IMR-90 (cell line): ENCODE measurements at regions of chr4 and their contacts with region 1.

Region 1: DNA sequence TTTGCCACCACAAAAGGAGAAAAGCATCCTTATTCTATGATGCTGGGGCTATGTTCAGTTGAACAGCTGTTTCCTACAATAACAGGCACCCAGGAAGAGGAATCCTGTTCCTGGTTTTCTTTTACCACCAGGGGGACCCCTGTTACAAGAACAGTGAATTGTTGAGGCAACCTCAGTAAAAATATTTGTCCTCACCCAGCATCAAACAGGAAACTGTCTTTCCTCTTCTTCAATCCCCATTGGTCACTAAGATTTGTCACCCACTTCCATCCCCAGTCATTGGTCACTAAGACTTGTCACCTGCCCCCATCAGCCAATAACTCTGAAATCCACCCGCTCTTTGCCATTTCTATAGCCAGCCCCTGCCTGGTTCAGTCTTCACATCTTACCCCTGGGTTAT is 143.5 kb upstream of the GALNT7 start:
- DNase-seq: peak; percentile 77
- ATAC-seq: peak; percentile 90
- H3K4me3 ChIP-seq: no peak overlapping the region
- H3K27ac ChIP-seq: no peak overlapping the region
- H3K4me1 ChIP-seq: no peaks in the 10 kb centered on the region
- H3K27me3 ChIP-seq: peaks cover 14% of the 10 kb centered on the region
- CTCF ChIP-seq: peak; percentile 87
- POLR2A ChIP-seq: no peak
- RAD21 ChIP-seq: peak; percentile 85

Region 2: GRCh38 chr4:173223743-173224142 is 198.6 kb after region 1 on chr4:
- CTCF ChIA-PET with region 1: no interaction called
- POLR2A ChIA-PET with region 1: interaction called, 21 read pairs
- dilution Hi-C with region 1: no loop called
- in situ Hi-C with region 1: no loop called
- intact Hi-C with region 1: no loop called
- DNase-seq: no peak
- ATAC-seq: no peak
- H3K4me3 ChIP-seq: no peak overlapping the region
- H3K27ac ChIP-seq: no peak overlapping the region
- H3K4me1 ChIP-seq: no peaks in the 10 kb centered on the region
- H3K27me3 ChIP-seq: no peaks in the 10 kb centered on the region
- CTCF ChIP-seq: no peak
- POLR2A ChIP-seq: no peak
- RAD21 ChIP-seq: no peak

Region 3: GRCh38 chr4:173301518-173302201 is 276.5 kb after region 1 on chr4:
- CTCF ChIA-PET with region 1: interaction called, 14 read pairs
- POLR2A ChIA-PET with region 1: no interaction called
- dilution Hi-C with region 1: no loop called
- in situ Hi-C with region 1: no loop called
- intact Hi-C with region 1: loop called (anchors 1 kb)
- DNase-seq: peak; percentile 66
- ATAC-seq: peak; percentile 75
- H3K4me3 ChIP-seq: no peak overlapping the region
- H3K27ac ChIP-seq: no peak overlapping the region
- H3K4me1 ChIP-seq: no peaks in the 10 kb centered on the region
- H3K27me3 ChIP-seq: no peaks in the 10 kb centered on the region
- CTCF ChIP-seq: peak; percentile 74
- POLR2A ChIP-seq: no peak
- RAD21 ChIP-seq: peak; percentile 63